ENCODE measurements at regions of chr22 and their contacts with region 1.

Region 1: GRCh38 chr22:50627642-50628542 is at the start of gene ARSA:
- DNase-seq: peak in 1 of 2 experiments; percentile 79
- H3K4me3 ChIP-seq: peak within 1 kb of the TSS; percentile 60 to 76 (median 76)
- H3K27ac ChIP-seq: no peak within 1 kb of the TSS
- H3K4me1 ChIP-seq: peaks cover 0 to 9% (median 6%) of the 10 kb centered on the region in 4 experiments; a peak in 5 of 7 replicates
- H3K27me3 ChIP-seq: peaks cover 0 to 10% (median 5%) of the 10 kb centered on the region in 4 experiments; a peak in 4 of 7 replicates
- CTCF ChIP-seq: peak; percentile 29 to 54 (median 41)
- EP300 ChIP-seq: no peak
- POLR2A ChIP-seq: no peak
- RAD21 ChIP-seq: peak; percentile 36 to 60; a peak in 3 of 4 replicates
- total RNA-seq, gene ARSA: 7.7 and 9.8 TPM in 2 replicates

Region 2: GRCh38 chr22:50691521-50691920 is 63.6 kb after region 1 on chr22:
- CTCF ChIA-PET with region 1: interaction called, 281 read pairs
- POLR2A ChIA-PET with region 1: interaction called, 3 read pairs
- DNase-seq: peak in 1 of 2 experiments; percentile 48
- H3K4me3 ChIP-seq: no peak overlapping the region
- H3K27ac ChIP-seq: no peak overlapping the region
- H3K4me1 ChIP-seq: no peaks in the 10 kb centered on the region
- H3K27me3 ChIP-seq: peaks cover 0 to 2% (median under 1%) of the 10 kb centered on the region in 4 experiments; a peak in 2 of 7 replicates
- CTCF ChIP-seq: peak in 2 of 3 experiments; percentile 67 to 68; a peak in 3 of 4 replicates
- EP300 ChIP-seq: no peak
- POLR2A ChIP-seq: no peak
- RAD21 ChIP-seq: peak; percentile 76 to 78

Region 3: GRCh38 chr22:50702261-50702671 is 74.4 kb after region 1 on chr22:
- CTCF ChIA-PET with region 1: interaction called, 281 read pairs
- POLR2A ChIA-PET with region 1: interaction called, 4 read pairs
- DNase-seq: no peak
- H3K4me3 ChIP-seq: no peak overlapping the region
- H3K27ac ChIP-seq: no peak overlapping the region
- H3K4me1 ChIP-seq: peaks cover 0 to 14% (median 3%) of the 10 kb centered on the region in 4 experiments; a peak in 5 of 7 replicates
- H3K27me3 ChIP-seq: peaks cover 6 to 17% (median 10%) of the 10 kb centered on the region in 4 experiments; a peak in 6 of 7 replicates
- CTCF ChIP-seq: no peak
- EP300 ChIP-seq: no peak
- POLR2A ChIP-seq: no peak
- RAD21 ChIP-seq: no peak

Region 4: GRCh38 chr22:50726643-50727340 is 98.9 kb after region 1 on chr22:
- CTCF ChIA-PET with region 1: interaction called, 14 read pairs
- POLR2A ChIA-PET with region 1: no interaction called
- DNase-seq: no peak
- H3K4me3 ChIP-seq: no peak overlapping the region
- H3K27ac ChIP-seq: no peak overlapping the region
- H3K4me1 ChIP-seq: peaks cover 0 to 3% (median 0%) of the 10 kb centered on the region in 4 experiments; a peak in 1 of 7 replicates
- H3K27me3 ChIP-seq: peaks cover 23 to 55% (median 45%) of the 10 kb centered on the region in 4 experiments
- CTCF ChIP-seq: peak; percentile 26 to 43 (median 36); a peak in 3 of 4 replicates
- EP300 ChIP-seq: no peak
- POLR2A ChIP-seq: no peak
- RAD21 ChIP-seq: peak in 1 of 2 experiments; percentile 19; a peak in 1 of 4 replicates

Measured in H1 (cell line).